ENCODE measurements at regions of chr6 and their contacts with region 1.

Region 1: DNA sequence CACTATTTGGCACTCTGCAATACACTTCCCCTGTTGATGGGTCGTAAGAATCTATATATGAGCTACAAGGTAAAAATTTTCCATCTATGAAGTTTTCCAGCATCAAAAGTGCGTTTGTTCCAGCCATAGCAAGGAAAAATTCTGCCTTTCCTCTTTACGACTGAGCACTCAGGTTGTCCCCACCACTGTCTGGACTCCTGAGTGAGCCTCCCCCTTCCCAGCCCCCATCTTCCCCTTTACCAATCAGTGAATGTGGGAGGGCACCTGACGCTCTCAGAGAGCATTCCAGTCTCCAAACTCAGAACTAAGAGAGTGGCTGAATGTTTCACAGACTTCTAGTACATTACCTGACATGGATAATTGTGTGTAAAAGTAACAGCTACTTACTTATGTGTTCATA is at the start of gene ALDH8A1:
- DNase-seq: no peak
- H3K4me3 ChIP-seq: no peak within 1 kb of the TSS
- H3K27ac ChIP-seq: no peak within 1 kb of the TSS
- H3K4me1 ChIP-seq: no peaks in the 10 kb centered on the region
- H3K27me3 ChIP-seq: no peaks in the 10 kb centered on the region
- CTCF ChIP-seq: no peak
- POLR2A ChIP-seq: no peak
- total RNA-seq, gene ALDH8A1: 0.24 to 2.2 (median 0.94) TPM

Region 2: DNA sequence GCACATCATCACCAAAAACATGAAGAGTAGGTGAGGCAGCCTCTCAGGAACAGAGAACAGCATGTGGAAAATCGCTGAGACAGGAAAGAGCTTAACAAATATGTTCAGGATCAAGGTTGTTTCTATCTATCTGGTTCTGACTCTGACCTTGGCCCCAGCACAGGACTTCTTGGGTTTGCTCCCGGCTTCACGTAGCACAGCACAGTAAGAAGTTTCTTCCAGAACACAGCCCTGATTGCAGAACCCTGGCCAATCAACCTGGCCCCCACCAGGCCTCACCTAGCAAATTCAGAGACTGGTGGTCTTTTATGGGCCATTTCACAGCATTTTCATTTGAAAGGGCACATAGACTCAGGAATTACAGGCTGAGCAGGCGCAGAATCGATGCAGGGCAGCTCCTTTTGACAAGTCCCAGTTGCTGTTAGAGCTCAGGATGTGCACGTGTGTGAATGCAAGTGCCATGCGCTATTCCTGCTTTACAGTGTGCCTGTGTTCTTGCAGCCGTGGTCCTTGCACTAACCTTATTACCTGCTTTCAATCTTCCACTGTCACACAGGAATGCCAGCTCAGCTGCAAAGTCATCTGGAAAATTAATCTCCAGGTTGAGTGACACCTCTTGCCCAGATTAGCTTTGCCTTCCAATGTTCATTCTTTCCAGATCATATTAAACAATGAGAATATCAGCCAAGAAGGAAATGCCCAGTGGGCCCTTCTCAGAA is 797.0 kb before region 1 on chr6:
- intact Hi-C with region 1: loop called in 1 of 2 experiments (anchors 10 kb)
- DNase-seq: peak in 4 of 7 donors; percentile 34 to 68 (median 48)
- H3K4me3 ChIP-seq: no peak overlapping the region
- H3K27ac ChIP-seq: no peak overlapping the region
- H3K4me1 ChIP-seq: peaks cover 0 to 9% of the 10 kb centered on the region in 2 donors
- H3K27me3 ChIP-seq: no peaks in the 10 kb centered on the region
- CTCF ChIP-seq: no peak
- POLR2A ChIP-seq: no peak